ENCODE measurements at regions of chr1 and their contacts with region 1.

Region 1: DNA sequence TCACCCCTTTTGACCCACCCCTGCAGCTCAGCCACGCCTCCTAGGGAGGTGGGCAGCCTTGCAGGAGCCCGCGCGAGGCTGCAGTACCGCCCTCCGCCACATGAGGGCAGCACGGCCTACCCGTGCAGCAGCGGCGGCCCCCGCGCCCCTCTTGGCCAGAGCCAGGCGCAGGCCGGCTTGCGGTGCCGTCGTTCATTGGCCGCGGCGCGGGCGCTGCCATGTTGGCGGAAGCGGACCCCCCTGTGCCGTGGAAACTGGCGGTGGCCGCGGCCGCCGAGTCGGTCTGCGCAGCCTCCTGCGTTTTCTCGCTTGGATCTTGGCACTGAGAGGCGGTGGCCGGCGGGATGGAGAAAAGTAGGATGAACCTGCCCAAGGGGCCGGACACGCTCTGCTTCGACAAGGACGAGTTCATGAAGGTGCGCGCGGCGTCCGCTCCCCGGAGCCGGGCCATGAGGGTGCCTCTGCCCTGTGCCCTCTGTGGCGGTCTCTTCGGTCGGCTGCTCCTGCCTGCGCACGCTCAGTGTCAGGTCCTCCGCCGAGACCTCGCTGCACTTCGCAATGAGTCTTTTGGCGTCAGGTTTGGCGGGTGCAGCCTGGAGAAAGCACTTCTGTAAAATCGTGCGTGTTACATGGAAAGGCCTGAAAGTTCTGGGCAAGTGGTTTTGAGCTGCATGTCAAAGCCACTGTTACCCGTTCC is at the start of gene COG2:
- DNase-seq: peak; percentile 85 to 99 (median 96)
- ATAC-seq: peak; percentile 88
- H3K4me3 ChIP-seq: peak within 1 kb of the TSS; percentile 99
- H3K4me3 Mint-ChIP-seq: peak within 1 kb of the TSS; percentile 96
- H3K27ac ChIP-seq: peak within 1 kb of the TSS; percentile 64 to 78
- H3K27ac Mint-ChIP-seq: peak within 1 kb of the TSS; percentile 87
- H3K4me1 ChIP-seq: peaks cover 44% of the 10 kb centered on the region
- H3K4me1 Mint-ChIP-seq: peaks cover 54% of the 10 kb centered on the region
- H3K27me3 ChIP-seq: peaks cover 0 to 7% of the 10 kb centered on the region in 2 experiments
- H3K27me3 Mint-ChIP-seq: peaks cover 26% of the 10 kb centered on the region
- CTCF ChIP-seq: peak; percentile 100
- total RNA-seq, gene COG2: 17.3 to 21.4 TPM

Region 2: DNA sequence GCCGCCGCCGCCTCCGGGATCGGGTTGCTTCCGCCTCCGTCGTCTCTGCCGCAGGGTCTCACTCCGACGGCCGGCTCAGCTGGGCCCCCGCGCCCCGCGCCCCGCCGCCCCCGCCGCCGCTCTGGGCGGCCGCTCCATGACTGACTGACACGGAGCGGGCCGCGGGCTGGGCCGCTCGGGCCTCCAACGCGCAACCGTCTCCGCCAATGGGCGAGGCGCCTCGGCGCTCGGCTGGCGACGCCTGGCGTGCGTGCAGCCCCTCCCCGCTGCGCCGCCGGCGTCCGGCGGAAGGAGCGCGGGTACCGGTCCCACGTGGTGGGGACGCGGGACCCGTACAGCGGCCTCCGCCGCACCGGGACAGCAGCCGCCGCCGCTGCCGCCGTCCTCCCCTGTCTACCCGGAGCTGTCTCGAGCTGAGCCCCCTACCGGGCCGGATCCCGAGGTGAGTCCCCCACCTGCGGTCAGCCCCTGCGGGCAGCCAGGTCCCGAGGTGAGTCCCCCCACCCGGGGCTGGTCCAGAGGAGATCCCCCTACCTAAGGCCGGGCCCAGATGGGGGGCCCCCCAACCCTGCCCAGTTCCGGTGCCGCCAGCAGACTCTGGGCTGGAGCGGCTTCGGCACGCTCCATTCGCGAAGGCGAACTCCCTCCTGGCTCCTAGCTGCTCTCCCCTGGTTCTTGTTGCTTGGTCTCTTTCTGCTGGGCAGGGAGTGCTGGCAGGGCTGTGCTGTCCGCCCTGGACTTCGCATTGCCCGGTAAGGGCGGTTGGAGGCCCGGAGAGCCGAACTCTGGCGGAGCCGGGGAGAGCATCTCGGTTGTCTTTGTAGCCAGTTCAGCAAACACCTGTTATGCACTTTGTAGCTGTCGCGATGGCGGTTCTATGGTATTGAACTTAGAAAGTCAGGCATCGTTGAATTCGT is 1016.2 kb before region 1 on chr1 and contains the starts of genes TAF5L and URB2:
- CTCF ChIA-PET with region 1: no interaction called
- POLR2A ChIA-PET with region 1: no interaction called
- intact Hi-C with region 1: loop called in 1 of 2 experiments (anchors 2 kb)
- DNase-seq: peak; percentile 63 to 94 (median 78)
- ATAC-seq: peak; percentile 91
- H3K4me3 ChIP-seq: peak within 1 kb of the TSS; percentile 93
- H3K4me3 Mint-ChIP-seq: peak within 1 kb of the TSS; percentile 99
- H3K27ac ChIP-seq: peak within 1 kb of the TSS; percentile 67 to 76
- H3K27ac Mint-ChIP-seq: peak within 1 kb of the TSS; percentile 91
- H3K4me1 ChIP-seq: peaks cover 26% of the 10 kb centered on the region
- H3K4me1 Mint-ChIP-seq: peaks cover 62% of the 10 kb centered on the region
- H3K27me3 ChIP-seq: no peaks in the 10 kb centered on the region
- H3K27me3 Mint-ChIP-seq: no peaks in the 10 kb centered on the region
- CTCF ChIP-seq: no peak
- total RNA-seq, gene TAF5L: 19.5 to 21.9 TPM
- total RNA-seq, gene URB2: 4.1 to 4.2 TPM

Region 3: DNA sequence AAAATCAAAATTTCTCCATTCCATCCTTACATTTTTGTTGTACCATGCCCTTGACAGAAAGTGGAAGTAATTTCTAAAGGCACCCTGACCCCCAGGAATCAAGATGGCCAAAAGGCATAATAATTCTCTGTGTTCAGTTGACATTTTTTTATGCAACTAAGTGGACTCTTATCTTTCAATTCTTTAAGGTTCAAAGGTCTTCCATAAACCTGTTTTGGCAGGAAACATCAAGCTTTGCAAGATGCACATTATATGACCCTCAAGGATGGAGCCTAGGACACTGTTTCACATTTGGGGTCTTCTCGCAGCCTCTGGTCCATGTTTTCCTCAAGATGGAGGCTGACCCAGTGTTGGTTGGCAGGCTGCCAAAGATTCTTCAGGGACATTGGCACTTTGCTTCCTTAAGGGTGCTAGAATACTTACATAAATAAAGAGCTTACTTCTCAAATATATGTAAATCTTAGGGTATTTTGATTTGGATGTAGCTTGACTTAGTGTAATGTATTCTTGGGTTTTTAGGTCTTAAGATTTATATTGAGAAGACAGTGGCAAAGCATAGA is 48.1 kb before region 1 on chr1:
- CTCF ChIA-PET with region 1: no interaction called
- POLR2A ChIA-PET with region 1: no interaction called
- intact Hi-C with region 1: no loop called
- DNase-seq: no peak
- ATAC-seq: no peak
- H3K4me3 ChIP-seq: no peak overlapping the region
- H3K4me3 Mint-ChIP-seq: no peak overlapping the region
- H3K27ac ChIP-seq: no peak overlapping the region
- H3K27ac Mint-ChIP-seq: no peak overlapping the region
- H3K4me1 ChIP-seq: no peaks in the 10 kb centered on the region
- H3K4me1 Mint-ChIP-seq: no peaks in the 10 kb centered on the region
- H3K27me3 ChIP-seq: peaks cover 1 to 15% of the 10 kb centered on the region in 2 experiments
- H3K27me3 Mint-ChIP-seq: peaks cover 43% of the 10 kb centered on the region
- CTCF ChIP-seq: no peak

Region 4: DNA sequence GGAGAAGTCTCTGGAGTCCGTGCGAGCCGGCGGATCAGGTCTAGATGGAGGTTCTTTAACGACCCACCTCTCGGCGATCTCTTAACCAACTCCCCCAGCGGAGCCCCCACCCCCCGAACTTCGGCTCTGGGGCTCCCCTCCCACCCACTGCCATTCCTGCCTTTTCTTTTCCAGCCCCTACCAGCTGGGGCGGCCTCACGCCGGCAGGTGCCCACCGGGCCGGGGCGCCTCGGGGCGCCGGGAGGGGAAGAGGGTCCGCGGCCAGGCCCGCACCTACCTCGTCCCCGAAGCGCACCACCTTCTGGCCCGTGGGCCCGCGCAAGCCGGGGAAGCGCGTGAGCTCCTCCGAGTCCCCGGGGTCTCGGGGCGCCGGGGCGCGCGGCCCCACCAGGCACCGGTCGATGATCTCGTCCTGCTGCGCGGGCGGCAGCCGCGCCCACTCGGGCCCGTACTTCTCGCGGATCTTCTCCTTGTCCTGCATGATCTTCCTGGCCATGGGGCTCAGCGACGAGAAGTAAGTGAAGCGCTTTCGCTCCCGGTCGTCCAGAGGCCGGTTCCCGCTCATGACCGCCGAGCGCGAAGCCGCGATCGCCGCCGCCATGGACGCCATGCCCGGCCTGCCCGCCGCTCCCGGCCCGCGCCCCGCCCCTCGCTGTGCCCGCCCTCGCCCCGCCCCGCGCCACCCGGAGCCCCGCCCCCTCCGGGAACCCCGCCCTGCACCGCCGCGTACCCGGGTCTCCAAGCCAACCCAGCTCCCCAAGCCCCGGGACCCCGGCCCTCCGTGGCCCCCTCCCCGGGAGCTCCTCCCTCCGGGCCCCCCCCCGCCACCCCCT is 225.7 kb after region 1 on chr1 and contains the start of gene C1orf198:
- CTCF ChIA-PET with region 1: no interaction called
- POLR2A ChIA-PET with region 1: no interaction called
- intact Hi-C with region 1: loop called in 1 of 2 experiments (anchors 5 kb)
- DNase-seq: peak; percentile 57 to 86 (median 72)
- ATAC-seq: peak; percentile 92
- H3K4me3 ChIP-seq: peak within 1 kb of the TSS; percentile 64
- H3K4me3 Mint-ChIP-seq: peak within 1 kb of the TSS; percentile 93
- H3K27ac ChIP-seq: no peak within 1 kb of the TSS
- H3K27ac Mint-ChIP-seq: no peak within 1 kb of the TSS
- H3K4me1 ChIP-seq: peaks cover 20% of the 10 kb centered on the region
- H3K4me1 Mint-ChIP-seq: peaks cover 19% of the 10 kb centered on the region
- H3K27me3 ChIP-seq: peaks cover 17 to 21% of the 10 kb centered on the region in 2 experiments
- H3K27me3 Mint-ChIP-seq: peaks cover 20% of the 10 kb centered on the region
- CTCF ChIP-seq: no peak
- total RNA-seq, gene C1orf198: 2.2 TPM

Region 5: DNA sequence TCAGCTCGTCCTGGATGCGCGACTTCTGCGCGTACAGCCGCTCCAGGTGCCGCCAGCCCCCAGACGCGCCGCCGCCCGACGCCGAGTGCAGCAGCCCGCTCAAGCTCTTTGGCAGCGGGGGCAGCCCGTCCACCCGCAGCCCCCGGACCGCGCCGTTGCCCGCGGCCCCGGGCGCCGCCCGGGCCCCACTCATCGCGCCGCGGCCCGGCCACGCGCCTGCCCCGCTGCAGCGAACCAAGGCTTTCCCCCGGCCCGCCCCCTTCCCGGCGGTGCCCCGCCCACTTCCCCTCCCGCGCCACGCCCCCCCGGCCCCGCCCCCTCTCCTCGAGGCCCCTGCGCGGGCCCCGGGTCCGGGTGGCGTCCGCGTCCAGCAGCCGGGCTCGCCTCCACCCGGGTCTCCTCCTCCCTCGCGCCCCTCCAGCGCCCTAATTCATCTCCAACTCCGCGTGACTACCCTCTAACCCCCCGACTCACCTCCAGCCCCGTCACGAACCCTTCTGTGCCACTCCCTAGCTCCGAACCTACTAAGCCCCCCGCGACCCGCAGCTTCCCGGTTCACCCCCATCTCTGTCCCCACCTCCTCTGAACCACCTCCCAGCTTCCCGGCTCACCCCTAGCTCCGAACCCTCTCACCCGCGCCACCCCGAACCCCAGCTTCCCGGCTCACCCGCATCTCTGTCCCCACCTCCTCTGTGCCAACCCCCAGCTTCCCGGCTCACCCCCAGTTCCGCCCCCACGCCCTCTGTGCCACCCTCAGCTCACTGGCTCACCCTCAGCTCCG is 397.8 kb after region 1 on chr1 and contains the start of gene FAM89A:
- CTCF ChIA-PET with region 1: no interaction called
- POLR2A ChIA-PET with region 1: no interaction called
- intact Hi-C with region 1: loop called in 1 of 2 experiments (anchors 5 kb)
- DNase-seq: peak; percentile 55 to 86 (median 70)
- ATAC-seq: peak; percentile 72
- H3K4me3 ChIP-seq: peak within 1 kb of the TSS; percentile 78
- H3K4me3 Mint-ChIP-seq: peak within 1 kb of the TSS; percentile 91
- H3K27ac ChIP-seq: peak within 1 kb of the TSS in 1 of 2 donors; percentile 3
- H3K27ac Mint-ChIP-seq: peak within 1 kb of the TSS; percentile 58
- H3K4me1 ChIP-seq: peaks cover 24% of the 10 kb centered on the region
- H3K4me1 Mint-ChIP-seq: peaks cover 40% of the 10 kb centered on the region
- H3K27me3 ChIP-seq: no peaks in the 10 kb centered on the region
- H3K27me3 Mint-ChIP-seq: no peaks in the 10 kb centered on the region
- CTCF ChIP-seq: no peak
- total RNA-seq, gene FAM89A: 3.3 to 4.0 TPM

Region 6: GRCh38 chr1:231240883-231241735 is 598.7 kb after region 1 on chr1 and contains the start of gene GNPAT:
- CTCF ChIA-PET with region 1: no interaction called
- POLR2A ChIA-PET with region 1: no interaction called
- intact Hi-C with region 1: loop called in 1 of 2 experiments (anchors 5 kb)
- DNase-seq: peak; percentile 83 to 95 (median 90)
- ATAC-seq: peak; percentile 95
- H3K4me3 ChIP-seq: peak within 1 kb of the TSS; percentile 93
- H3K4me3 Mint-ChIP-seq: peak within 1 kb of the TSS; percentile 98
- H3K27ac ChIP-seq: peak within 1 kb of the TSS; percentile 67 to 77
- H3K27ac Mint-ChIP-seq: peak within 1 kb of the TSS; percentile 87
- H3K4me1 ChIP-seq: peaks cover 30% of the 10 kb centered on the region
- H3K4me1 Mint-ChIP-seq: peaks cover 83% of the 10 kb centered on the region
- H3K27me3 ChIP-seq: no peaks in the 10 kb centered on the region
- H3K27me3 Mint-ChIP-seq: no peaks in the 10 kb centered on the region
- CTCF ChIP-seq: no peak
- total RNA-seq, gene GNPAT: 11.8 to 12.8 TPM

Region 7: DNA sequence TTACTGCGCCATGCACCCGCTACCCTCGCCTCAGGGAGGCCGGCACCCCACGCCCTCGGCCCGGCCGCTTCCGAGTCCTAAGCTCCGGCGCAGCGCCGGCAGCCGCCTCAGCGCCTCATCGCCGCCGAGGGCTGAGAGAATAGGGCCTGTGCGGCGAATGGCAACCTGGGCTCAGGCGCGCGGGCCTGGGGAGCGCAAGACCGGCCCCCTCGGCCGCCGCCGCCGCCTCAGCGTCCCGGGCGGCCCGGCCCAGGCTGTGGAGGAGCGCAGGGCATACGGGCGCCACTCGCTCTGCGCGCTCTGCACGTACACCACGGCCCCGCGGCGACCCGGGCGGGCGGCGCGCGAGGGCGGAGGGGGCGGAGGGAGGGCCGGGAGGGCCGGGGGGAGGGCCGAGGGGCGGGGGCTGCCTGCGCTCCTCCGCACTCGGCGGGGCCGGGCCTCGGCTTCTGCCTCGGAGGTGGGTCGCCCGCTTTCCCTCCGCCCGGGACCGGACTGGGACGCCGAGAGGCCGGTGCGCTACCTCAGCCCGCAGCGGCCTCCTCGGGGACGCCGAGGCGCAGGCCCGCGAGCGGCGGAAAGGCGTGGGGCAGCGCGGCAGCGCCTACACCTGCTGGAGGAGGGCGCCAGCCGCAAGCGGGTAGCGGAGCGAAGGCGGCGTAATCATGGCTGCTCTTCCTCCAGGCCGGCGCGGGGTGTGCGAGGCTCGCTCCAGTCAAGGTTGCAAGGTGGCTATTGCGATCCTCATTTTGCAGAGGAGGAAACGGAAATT is 779.8 kb after region 1 on chr1 and contains the start of gene EGLN1:
- CTCF ChIA-PET with region 1: no interaction called
- POLR2A ChIA-PET with region 1: no interaction called
- intact Hi-C with region 1: loop called in 1 of 2 experiments (anchors 5 kb)
- DNase-seq: peak; percentile 65 to 92 (median 80)
- ATAC-seq: peak; percentile 83
- H3K4me3 ChIP-seq: peak within 1 kb of the TSS; percentile 83
- H3K4me3 Mint-ChIP-seq: peak within 1 kb of the TSS; percentile 90
- H3K27ac ChIP-seq: peak within 1 kb of the TSS; percentile 36 to 83
- H3K27ac Mint-ChIP-seq: peak within 1 kb of the TSS; percentile 87
- H3K4me1 ChIP-seq: peaks cover 21% of the 10 kb centered on the region
- H3K4me1 Mint-ChIP-seq: peaks cover 49% of the 10 kb centered on the region
- H3K27me3 ChIP-seq: no peaks in the 10 kb centered on the region
- H3K27me3 Mint-ChIP-seq: no peaks in the 10 kb centered on the region
- CTCF ChIP-seq: peak; percentile 51
- total RNA-seq, gene EGLN1: 8.2 to 9.4 TPM